Calu3 (cell line): ENCODE measurements at regions of chr1 and their contacts with region 1.

Region 1: GRCh38 chr1:246566128-246566812 is at the starts of genes CNST and TFB2M:
- DNase-seq: peak; percentile 99
- H3K4me3 Mint-ChIP-seq: peak within 1 kb of the TSS; percentile 97
- H3K27ac Mint-ChIP-seq: peak within 1 kb of the TSS; percentile 74
- H3K4me1 Mint-ChIP-seq: peaks cover 20% of the 10 kb centered on the region
- H3K27me3 Mint-ChIP-seq: no peaks in the 10 kb centered on the region
- CTCF ChIP-seq: no peak
- total RNA-seq, gene CNST: 21.7 and 22.5 TPM in 2 replicates
- total RNA-seq, gene TFB2M: 21.8 and 23.0 TPM in 2 replicates

Region 2: GRCh38 chr1:246338546-246338945 is 227.7 kb before region 1 on chr1:
- CTCF ChIA-PET with region 1: no interaction called
- intact Hi-C with region 1: no loop called
- DNase-seq: no peak
- H3K4me3 Mint-ChIP-seq: no peak overlapping the region
- H3K27ac Mint-ChIP-seq: no peak overlapping the region
- H3K4me1 Mint-ChIP-seq: no peaks in the 10 kb centered on the region
- H3K27me3 Mint-ChIP-seq: no peaks in the 10 kb centered on the region
- CTCF ChIP-seq: no peak

Region 3: GRCh38 chr1:246506674-246507481 is 59.4 kb before region 1 on chr1 and contains the start of gene SMYD3:
- CTCF ChIA-PET with region 1: interaction called, 5 read pairs
- intact Hi-C with region 1: loop called (anchors 5 kb)
- DNase-seq: peak; percentile 82
- H3K4me3 Mint-ChIP-seq: peak within 1 kb of the TSS; percentile 100
- H3K27ac Mint-ChIP-seq: peak within 1 kb of the TSS; percentile 79
- H3K4me1 Mint-ChIP-seq: peaks cover 42% of the 10 kb centered on the region
- H3K27me3 Mint-ChIP-seq: no peaks in the 10 kb centered on the region
- CTCF ChIP-seq: no peak
- total RNA-seq, gene SMYD3: 34.2 and 35.1 TPM in 2 replicates

Region 4: GRCh38 chr1:246608616-246609376 is 42.5 kb after region 1 on chr1:
- CTCF ChIA-PET with region 1: no interaction called
- intact Hi-C with region 1: loop called (anchors 1 kb)
- DNase-seq: peak; percentile 92
- H3K4me3 Mint-ChIP-seq: peak overlapping the region; percentile 49
- H3K27ac Mint-ChIP-seq: peak overlapping the region; percentile 85
- H3K4me1 Mint-ChIP-seq: peaks cover 20% of the 10 kb centered on the region
- H3K27me3 Mint-ChIP-seq: no peaks in the 10 kb centered on the region
- CTCF ChIP-seq: peak; percentile 38

Region 5: DNA sequence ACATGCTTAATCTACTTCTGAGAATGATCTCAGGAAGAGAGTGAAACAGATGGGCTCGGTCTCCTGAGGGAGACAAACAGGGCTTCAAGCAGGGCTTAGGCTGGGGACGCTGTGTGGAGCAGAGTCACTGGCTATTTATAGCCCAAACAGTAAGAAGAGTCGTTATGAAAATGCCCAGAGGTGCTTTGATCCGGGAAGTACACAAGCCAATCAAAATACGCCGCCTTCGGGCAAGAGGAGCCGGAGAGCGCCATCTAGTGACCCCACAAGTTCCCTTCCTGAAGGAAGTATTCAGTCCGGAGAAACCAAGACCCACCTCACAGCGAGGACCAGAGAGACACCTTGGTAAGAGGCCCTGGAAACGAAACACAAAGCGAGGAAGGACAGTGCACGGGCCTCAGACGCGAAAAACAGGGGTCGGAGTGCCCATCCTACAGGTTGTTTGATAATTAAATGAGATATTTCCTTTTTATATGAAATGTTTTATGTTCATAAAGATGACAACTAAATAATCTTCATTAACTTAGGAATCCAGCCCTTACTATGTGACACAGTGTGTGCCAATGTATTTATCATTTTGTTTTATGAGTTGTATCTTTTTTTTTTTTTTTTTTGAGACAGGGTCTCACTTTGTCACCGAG is 132.9 kb after region 1 on chr1:
- CTCF ChIA-PET with region 1: no interaction called
- intact Hi-C with region 1: loop called (anchors 10 kb)
- DNase-seq: peak; percentile 90
- H3K4me3 Mint-ChIP-seq: peak overlapping the region; percentile 46
- H3K27ac Mint-ChIP-seq: peak overlapping the region; percentile 43
- H3K4me1 Mint-ChIP-seq: peaks cover 18% of the 10 kb centered on the region
- H3K27me3 Mint-ChIP-seq: no peaks in the 10 kb centered on the region
- CTCF ChIP-seq: peak; percentile 81